ENCODE measurements at regions of chr10 and their contacts with region 1.

Region 1: DNA sequence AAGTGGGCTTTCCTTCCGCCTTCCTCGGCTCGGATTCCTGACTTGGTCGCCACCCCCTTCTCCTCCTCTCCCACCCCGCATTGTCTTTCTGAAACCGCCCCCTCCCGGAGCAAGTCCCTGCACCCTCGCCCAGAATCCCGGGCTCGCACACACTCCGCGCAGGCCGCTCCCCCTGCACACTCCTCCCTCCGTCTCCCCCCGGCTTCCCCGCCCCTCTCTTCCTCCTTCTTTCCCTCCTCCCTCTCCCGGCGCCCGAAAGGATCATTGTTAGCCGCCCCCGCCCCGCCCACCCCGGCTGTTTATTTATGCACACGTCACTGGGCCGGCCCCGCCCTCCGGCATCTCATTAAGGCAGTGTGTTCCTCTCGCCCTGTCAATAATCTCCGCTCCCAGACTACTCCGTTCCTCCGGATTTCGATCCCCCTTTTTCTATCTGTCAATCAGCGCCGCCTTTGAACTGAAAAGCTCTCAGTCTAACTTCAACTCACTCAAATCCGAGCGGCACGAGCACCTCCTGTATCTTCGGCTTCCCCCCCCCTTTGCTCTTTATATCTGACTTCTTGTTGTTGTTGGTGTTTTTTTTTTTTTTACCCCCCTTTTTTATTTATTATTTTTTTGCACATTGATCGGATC is at the start of gene TCF7L2:
- DNase-seq: peak; percentile 96
- H3K4me3 ChIP-seq: peak within 1 kb of the TSS; percentile 71 to 93 (median 77)
- H3K27ac ChIP-seq: peak within 1 kb of the TSS; percentile 89
- H3K4me1 ChIP-seq: peaks cover 19% of the 10 kb centered on the region
- H3K27me3 ChIP-seq: no peaks in the 10 kb centered on the region
- CTCF ChIP-seq: no peak
- total RNA-seq, gene TCF7L2: 7.7 to 19.4 TPM

Region 2: GRCh38 chr10:112585126-112585525 is 364.9 kb before region 1 on chr10:
- CTCF ChIA-PET with region 1: no interaction called
- dilution Hi-C with region 1: no loop called
- in situ Hi-C with region 1: no loop called
- intact Hi-C with region 1: loop called (anchors 5 kb)
- DNase-seq: peak; percentile 75
- H3K4me3 ChIP-seq: no peak overlapping the region
- H3K27ac ChIP-seq: peak overlapping the region; percentile 47
- H3K4me1 ChIP-seq: peaks cover 12% of the 10 kb centered on the region
- H3K27me3 ChIP-seq: no peaks in the 10 kb centered on the region
- CTCF ChIP-seq: no peak

Region 3: DNA sequence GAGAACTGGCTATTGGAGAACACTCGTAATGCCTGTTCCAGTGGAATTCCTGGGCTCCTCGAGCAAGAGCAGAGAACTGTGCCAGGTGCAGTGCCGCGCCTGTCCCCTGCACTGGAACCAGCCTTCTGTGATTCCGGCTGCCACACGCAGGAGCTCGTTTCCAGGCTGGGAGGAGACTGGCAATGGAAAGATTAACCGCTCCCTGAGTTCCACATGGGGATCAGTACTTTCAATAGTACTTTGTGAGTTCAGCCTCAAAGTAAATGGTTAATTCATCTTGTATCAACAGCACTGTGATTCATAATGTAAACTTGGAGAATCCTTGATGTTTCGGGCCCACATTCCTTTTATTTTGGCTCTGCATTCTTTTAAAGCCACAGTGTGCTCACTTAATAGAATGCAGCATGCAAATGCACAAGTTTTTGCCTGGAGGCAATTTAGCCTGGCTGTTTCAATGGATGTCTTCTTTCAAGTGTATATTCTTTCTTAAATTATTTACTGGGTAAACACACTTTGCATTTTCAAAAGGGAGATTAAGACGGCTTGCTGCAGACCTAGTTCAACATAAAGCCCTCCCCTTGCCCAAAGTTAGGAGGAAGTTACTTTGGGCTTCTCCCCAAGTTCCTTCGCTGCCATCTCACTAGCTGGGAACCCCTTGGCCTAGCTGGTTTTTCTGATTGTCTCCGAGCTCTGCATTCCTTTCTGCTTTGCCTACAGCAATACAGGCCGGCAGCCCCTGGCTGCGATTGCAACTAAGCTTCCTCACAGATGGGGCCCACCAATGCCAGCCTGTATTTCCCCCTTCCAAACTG is 138.0 kb before region 1 on chr10:
- CTCF ChIA-PET with region 1: no interaction called
- dilution Hi-C with region 1: no loop called
- in situ Hi-C with region 1: no loop called
- intact Hi-C with region 1: loop called (anchors 5 kb)
- DNase-seq: peak; percentile 93
- H3K4me3 ChIP-seq: peak overlapping the region in 1 of 3 experiments; percentile 22
- H3K27ac ChIP-seq: no peak overlapping the region
- H3K4me1 ChIP-seq: peaks cover 38% of the 10 kb centered on the region
- H3K27me3 ChIP-seq: no peaks in the 10 kb centered on the region
- CTCF ChIP-seq: no peak

Region 4: DNA sequence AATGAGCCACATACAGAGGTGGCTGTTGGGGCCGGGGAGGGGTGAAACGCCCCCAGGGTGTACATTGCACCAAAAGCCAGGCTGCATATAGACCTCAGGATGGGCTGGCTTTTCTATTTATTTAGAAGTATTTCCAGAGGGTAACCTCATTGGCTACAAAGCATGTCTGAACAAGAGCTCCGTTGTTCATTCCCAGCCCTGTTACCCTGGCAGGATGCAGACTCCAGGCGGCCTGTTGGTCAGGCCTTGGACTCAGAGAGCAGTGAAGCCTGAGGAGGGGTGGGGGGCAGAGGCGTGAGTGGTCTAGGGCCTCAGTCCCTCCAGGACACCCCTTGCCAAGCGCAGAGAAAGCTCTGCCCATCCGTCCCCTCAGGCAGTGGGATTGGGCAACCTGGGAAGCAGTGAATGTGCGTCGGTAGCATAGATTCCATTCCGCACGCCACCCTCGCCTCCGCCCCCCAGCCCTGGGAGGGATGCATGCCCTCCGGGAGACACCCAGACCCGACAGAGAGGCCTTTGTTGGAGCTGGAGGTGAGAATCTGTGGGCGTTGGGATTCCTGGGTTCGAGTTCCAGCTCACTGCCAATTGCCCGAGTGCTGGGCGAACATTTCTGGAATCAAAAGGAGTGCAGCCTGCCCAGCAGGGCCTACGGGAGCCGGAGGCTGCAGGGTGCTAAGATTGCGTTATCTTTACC is 42.0 kb after region 1 on chr10:
- CTCF ChIA-PET with region 1: no interaction called
- dilution Hi-C with region 1: no loop called
- in situ Hi-C with region 1: no loop called
- intact Hi-C with region 1: loop called (anchors 2 kb)
- DNase-seq: peak; percentile 96
- H3K4me3 ChIP-seq: peak overlapping the region in 1 of 3 experiments; percentile 2
- H3K27ac ChIP-seq: peak overlapping the region; percentile 89
- H3K4me1 ChIP-seq: peaks cover 55% of the 10 kb centered on the region
- H3K27me3 ChIP-seq: no peaks in the 10 kb centered on the region
- CTCF ChIP-seq: no peak

Region 5: DNA sequence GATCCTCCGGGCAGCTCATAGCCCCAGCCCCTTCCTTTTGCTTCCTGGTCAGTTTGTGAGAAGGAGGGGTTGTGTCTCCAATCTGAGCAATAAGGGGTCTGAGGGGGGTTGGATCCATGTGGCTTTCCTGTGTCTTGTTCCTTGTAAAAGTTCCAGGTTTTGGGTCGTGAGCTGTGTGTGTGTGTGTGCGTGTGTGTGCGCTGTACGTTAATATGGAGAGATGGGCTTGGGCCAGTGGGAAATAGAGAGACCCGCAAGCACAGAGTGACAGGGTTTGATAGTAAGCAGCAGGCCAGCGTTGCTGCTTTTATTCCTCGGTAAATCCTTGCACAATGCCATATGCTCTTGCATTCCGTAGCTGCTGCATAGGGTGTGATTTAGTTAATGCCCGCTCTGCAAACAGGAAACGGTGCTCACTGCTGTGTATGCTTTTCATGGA is 108.6 kb after region 1 on chr10:
- CTCF ChIA-PET with region 1: no interaction called
- dilution Hi-C with region 1: no loop called
- in situ Hi-C with region 1: no loop called
- intact Hi-C with region 1: loop called (anchors 5 kb)
- DNase-seq: peak; percentile 44
- H3K4me3 ChIP-seq: no peak overlapping the region
- H3K27ac ChIP-seq: peak overlapping the region; percentile 65
- H3K4me1 ChIP-seq: peaks cover 58% of the 10 kb centered on the region
- H3K27me3 ChIP-seq: no peaks in the 10 kb centered on the region
- CTCF ChIP-seq: no peak